ENCODE measurements at regions of chr19 and their contacts with region 1.

Region 1: DNA sequence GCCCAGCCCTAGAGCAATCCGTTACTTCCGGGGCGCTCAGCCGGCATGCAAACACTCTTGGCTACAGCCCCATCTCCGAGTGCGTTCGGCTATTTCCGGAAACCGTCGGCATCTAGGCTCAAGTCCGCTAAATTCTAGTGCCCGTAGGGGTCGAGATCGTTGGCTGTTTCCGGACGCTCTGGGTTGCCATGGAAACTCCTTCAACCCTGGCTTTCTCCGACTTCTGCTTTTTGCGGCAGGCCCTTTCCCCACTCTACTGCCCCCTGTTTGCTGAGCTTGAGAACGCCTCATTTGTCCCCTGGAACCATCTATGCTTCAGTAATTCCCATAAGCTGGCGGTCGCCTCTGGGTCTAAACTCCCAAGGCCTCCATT is 533 bp upstream of the PIK3R2 start:
- DNase-seq: peak; percentile 99
- ATAC-seq: peak; percentile 89
- H3K4me3 ChIP-seq: peak overlapping the region; percentile 24 to 30
- H3K27ac ChIP-seq: peak overlapping the region in 1 of 2 donors; percentile 85
- H3K4me1 ChIP-seq: peaks cover 0 to 2% of the 10 kb centered on the region in 2 donors
- H3K27me3 ChIP-seq: no peaks in the 10 kb centered on the region

Region 2: DNA sequence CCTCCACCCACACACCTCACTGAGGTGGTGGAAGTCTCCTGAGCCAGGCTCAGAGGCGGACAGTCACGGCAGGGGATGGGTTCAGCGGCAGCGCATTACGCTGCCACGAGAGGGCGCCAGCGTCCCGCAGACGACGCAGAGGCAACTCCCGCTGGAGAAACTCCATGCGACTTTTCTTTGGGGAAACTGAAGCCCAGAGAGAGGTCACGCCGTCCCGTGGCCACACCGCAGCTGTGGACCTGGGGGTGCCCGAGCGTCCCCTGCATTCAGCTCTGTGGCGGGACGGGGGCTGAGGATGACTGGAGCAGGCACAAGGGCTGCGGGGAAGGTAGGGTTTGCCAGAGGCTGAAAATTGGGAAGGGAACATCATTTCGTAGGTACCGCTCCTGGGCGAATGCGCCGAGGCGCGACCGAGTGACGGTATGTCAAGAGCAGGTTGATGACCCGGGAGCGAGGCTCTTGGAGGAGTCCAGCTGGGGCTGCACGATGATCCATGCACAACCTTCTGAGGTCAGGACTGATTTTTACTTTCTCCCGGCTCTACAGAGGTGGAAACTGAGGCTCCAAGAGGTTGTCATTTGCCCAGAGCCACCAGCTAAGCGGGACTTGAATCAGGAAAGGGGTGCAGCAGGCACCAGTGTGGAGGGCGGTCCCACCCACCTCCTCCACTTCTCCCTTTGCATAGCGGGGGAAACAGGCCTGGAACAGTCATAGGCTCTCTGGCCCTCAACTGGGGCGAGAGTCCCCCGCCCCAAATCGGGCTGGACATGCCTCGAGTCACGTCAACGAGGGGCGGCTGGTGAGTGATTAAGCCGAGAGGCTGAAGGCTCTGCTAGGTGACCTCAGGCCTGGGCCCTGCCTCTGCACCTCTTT is 145.2 kb before region 1 on chr19:
- intact Hi-C with region 1: loop called (anchors 10 kb)
- DNase-seq: peak; percentile 90 to 94
- ATAC-seq: peak; percentile 94
- H3K4me3 ChIP-seq: peak overlapping the region; percentile 13 to 22
- H3K27ac ChIP-seq: peak overlapping the region in 1 of 2 donors; percentile 63
- H3K4me1 ChIP-seq: no peaks in the 10 kb centered on the region
- H3K27me3 ChIP-seq: no peaks in the 10 kb centered on the region

Region 3: GRCh38 chr19:18109733-18110595 is 42.5 kb before region 1 on chr19:
- intact Hi-C with region 1: loop called (anchors 5 kb)
- DNase-seq: peak; percentile 73 to 89
- ATAC-seq: peak; percentile 81
- H3K4me3 ChIP-seq: peak overlapping the region; percentile 37 to 49
- H3K27ac ChIP-seq: no peak overlapping the region
- H3K4me1 ChIP-seq: no peaks in the 10 kb centered on the region
- H3K27me3 ChIP-seq: no peaks in the 10 kb centered on the region

Region 4: GRCh38 chr19:18117692-18118378 is 34.6 kb before region 1 on chr19:
- intact Hi-C with region 1: loop called in 1 of 2 experiments (anchors 5 kb)
- DNase-seq: peak; percentile 94 to 98
- ATAC-seq: peak; percentile 94
- H3K4me3 ChIP-seq: peak overlapping the region; percentile 46 to 72
- H3K27ac ChIP-seq: no peak overlapping the region
- H3K4me1 ChIP-seq: no peaks in the 10 kb centered on the region
- H3K27me3 ChIP-seq: no peaks in the 10 kb centered on the region

Region 5: DNA sequence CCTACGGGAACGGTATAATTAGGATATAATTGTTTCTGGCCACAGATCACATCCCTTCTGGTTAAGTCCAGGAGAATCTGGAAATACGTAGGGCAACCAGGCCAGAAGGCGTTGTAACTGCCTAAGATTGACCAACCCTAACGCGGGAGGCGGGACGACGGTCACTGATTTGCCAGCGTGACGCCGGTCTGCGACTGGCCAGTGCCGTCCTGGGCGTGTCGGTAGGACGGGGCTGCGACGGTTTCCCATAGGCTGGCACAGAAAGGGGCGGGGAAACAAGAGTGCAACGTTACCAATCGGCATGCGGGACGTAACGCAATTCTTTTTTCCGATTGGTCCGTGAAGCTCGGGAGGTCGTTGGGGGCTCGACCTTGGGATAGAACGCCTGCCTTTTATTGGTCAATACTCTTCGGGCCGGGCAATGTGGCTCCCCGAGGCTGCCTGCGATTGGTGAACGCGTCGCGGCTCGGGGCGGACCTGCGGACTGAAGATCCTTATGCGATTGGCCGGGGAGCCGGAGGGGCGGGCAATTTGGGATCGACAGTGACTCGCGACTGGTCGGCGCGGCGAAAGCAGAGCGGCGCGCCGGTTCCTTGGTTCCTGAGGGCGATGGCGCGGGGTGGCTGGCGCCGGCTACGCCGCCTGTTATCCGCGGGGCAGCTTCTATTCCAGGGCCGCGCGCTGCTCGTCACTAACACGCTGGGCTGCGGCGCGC is 40.4 kb after region 1 on chr19 and contains the start of gene MPV17L2:
- intact Hi-C with region 1: no loop called
- DNase-seq: peak; percentile 100
- ATAC-seq: peak; percentile 97
- H3K4me3 ChIP-seq: peak within 1 kb of the TSS; percentile 37 to 59
- H3K27ac ChIP-seq: peak within 1 kb of the TSS; percentile 46 to 94
- H3K4me1 ChIP-seq: no peaks in the 10 kb centered on the region
- H3K27me3 ChIP-seq: no peaks in the 10 kb centered on the region
- total RNA-seq, gene MPV17L2: 5.7 to 6.2 TPM

Measured in aorta (tissue), 5 donors.